A673 (cell line): ENCODE measurements at regions of chr20 and their contacts with region 1.

Region 1: DNA sequence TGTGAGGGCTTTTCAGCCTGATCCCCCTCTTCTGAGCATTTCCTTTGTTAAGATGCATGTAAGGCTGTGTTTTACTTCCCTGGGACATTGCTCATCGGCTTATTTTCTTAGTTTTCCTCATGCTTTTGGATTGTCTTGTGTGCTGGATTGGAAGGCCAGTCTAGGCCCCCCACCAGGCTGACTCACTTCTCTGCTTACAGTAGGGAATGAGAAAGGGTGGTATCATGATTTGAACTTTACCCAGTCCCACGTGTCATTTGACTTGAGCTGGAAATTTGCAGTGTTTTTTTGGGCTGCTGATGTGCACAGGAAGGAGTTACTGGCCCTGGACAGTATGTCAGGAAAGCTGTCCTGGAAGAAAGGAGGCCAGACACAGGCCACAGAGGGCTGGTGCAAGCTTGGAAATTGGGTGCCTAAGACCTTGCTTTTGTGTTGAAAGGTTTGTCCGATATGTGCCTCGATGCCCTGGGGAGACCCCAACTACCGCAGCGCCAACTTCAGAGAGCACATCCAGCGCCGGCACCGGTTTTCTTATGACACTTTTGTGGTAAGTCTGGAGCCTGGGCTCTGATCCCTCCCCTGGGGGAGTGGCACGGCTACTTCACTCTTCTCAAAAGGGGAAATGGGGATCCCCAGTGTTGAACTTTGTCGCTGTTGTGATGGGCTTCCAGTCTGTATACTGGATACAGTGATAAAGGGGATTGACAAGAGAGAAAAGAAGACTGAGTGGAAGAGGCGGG is 12.8 kb downstream of the RNF114 start:
- DNase-seq: peak; percentile 21
- H3K4me3 ChIP-seq: no peak overlapping the region
- H3K27ac ChIP-seq: no peak overlapping the region
- H3K4me1 ChIP-seq: no peaks in the 10 kb centered on the region
- H3K27me3 ChIP-seq: no peaks in the 10 kb centered on the region
- CTCF ChIP-seq: no peak

Region 2: DNA sequence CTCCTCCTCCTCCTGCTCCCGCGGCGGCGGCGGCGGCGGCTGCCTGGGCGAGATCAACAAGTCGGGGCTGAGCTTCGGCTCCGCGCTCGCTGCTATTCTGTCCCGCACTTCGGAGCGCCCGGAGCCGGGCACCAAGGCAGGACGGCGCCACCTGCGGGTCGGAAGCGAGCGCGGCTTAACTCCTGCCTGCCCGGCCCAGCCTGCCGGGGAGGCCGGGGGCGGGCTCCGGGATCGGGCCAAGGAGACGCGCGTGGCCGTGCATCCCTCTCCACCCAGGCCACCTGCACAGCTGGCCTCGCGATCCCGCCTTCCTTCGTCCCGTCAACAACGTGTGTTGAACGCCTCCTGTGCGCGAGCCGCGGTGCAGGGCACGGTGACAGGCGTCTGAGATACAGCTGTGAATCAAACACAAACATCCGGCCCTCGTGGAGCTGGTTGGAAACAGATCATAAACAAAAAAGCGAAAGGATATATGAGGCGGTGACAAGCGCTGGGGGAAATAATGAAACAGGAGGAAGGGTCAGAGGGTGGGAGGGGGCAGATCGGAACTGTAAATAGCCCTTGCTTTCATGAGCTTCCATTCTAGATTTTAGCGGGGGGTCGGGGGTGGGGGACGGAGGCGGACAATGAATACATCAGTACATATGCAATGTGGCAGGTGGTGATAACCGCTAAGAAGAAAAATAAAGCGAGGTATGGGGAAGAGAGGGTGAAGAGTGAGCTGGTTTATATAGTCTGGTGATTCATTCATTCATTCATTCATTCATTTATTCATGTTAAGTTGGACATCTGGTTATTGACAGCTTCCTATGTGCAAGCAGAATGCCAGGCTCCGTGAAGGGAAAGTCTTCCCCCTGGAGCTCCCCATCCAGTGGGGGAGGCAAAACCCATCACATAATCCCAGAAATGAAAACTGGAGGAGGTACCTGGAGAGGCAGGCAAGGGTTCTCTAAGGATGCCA is 464.5 kb before region 1 on chr20:
- CTCF ChIA-PET with region 1: interaction called, 15 read pairs
- POLR2A ChIA-PET with region 1: no interaction called
- intact Hi-C with region 1: no loop called
- DNase-seq: peak; percentile 86
- H3K4me3 ChIP-seq: peak overlapping the region; percentile 33
- H3K27ac ChIP-seq: no peak overlapping the region
- H3K4me1 ChIP-seq: no peaks in the 10 kb centered on the region
- H3K27me3 ChIP-seq: peaks cover 74% of the 10 kb centered on the region
- CTCF ChIP-seq: peak; percentile 85